Calu3 (cell line): ENCODE measurements at regions of chr10 and their contacts with region 1.

Region 1: GRCh38 chr10:13371897-13372470 is 23.9 kb upstream of the SEPHS1 start:
- DNase-seq: peak; percentile 76
- H3K4me3 Mint-ChIP-seq: no peak overlapping the region
- H3K27ac Mint-ChIP-seq: no peak overlapping the region
- H3K4me1 Mint-ChIP-seq: no peaks in the 10 kb centered on the region
- H3K27me3 Mint-ChIP-seq: peaks cover 17% of the 10 kb centered on the region
- CTCF ChIP-seq: peak; percentile 83

Region 2: GRCh38 chr10:13440185-13441061 is 68.4 kb after region 1 on chr10:
- CTCF ChIA-PET with region 1: interaction called, 36 read pairs
- intact Hi-C with region 1: loop called (anchors 1 kb)
- DNase-seq: peak; percentile 77
- H3K4me3 Mint-ChIP-seq: peak overlapping the region; percentile 68
- H3K27ac Mint-ChIP-seq: no peak overlapping the region
- H3K4me1 Mint-ChIP-seq: no peaks in the 10 kb centered on the region
- H3K27me3 Mint-ChIP-seq: peaks cover 40% of the 10 kb centered on the region
- CTCF ChIP-seq: peak; percentile 93

Region 3: GRCh38 chr10:13485623-13486022 is 113.6 kb after region 1 on chr10:
- CTCF ChIA-PET with region 1: no interaction called
- intact Hi-C with region 1: loop called (anchors 1 kb)
- DNase-seq: no peak
- H3K4me3 Mint-ChIP-seq: no peak overlapping the region
- H3K27ac Mint-ChIP-seq: no peak overlapping the region
- H3K4me1 Mint-ChIP-seq: no peaks in the 10 kb centered on the region
- H3K27me3 Mint-ChIP-seq: no peaks in the 10 kb centered on the region
- CTCF ChIP-seq: no peak

Region 4: GRCh38 chr10:13536674-13537366 is 164.8 kb after region 1 on chr10:
- CTCF ChIA-PET with region 1: interaction called, 21 read pairs
- intact Hi-C with region 1: loop called (anchors 1 kb)
- DNase-seq: peak; percentile 74
- H3K4me3 Mint-ChIP-seq: no peak overlapping the region
- H3K27ac Mint-ChIP-seq: no peak overlapping the region
- H3K4me1 Mint-ChIP-seq: no peaks in the 10 kb centered on the region
- H3K27me3 Mint-ChIP-seq: peaks cover 62% of the 10 kb centered on the region
- CTCF ChIP-seq: peak; percentile 66

Region 5: GRCh38 chr10:13586676-13587355 is 214.8 kb after region 1 on chr10 and contains the start of gene PRPF18:
- CTCF ChIA-PET with region 1: interaction called, 8 read pairs
- intact Hi-C with region 1: loop called (anchors 2 kb)
- DNase-seq: peak; percentile 95
- H3K4me3 Mint-ChIP-seq: peak within 1 kb of the TSS; percentile 97
- H3K27ac Mint-ChIP-seq: peak within 1 kb of the TSS; percentile 92
- H3K4me1 Mint-ChIP-seq: no peaks in the 10 kb centered on the region
- H3K27me3 Mint-ChIP-seq: peaks cover 8% of the 10 kb centered on the region
- CTCF ChIP-seq: peak; percentile 89
- total RNA-seq, gene PRPF18: 19.9 and 21.3 TPM in 2 replicates

Region 6: DNA sequence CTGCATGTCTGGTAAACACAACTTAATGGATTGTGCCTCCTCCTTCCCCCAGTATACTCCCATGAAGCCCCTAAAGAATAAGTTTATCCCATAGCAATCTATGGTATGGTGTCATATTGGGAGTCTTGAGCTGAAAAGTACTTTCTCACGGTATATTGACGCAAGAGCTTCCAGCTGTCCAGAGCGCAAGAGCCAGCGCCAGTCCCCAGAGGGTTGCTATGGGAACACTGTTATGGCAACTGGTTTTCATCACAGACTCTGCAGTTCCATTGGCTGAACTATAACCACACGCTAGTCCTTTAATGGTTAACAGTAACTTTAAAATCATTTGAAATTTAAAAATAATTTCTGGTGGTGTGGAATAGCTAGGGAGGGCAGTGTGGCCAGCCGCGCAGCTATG is 261.7 kb after region 1 on chr10:
- CTCF ChIA-PET with region 1: no interaction called
- intact Hi-C with region 1: no loop called
- DNase-seq: no peak
- H3K4me3 Mint-ChIP-seq: no peak overlapping the region
- H3K27ac Mint-ChIP-seq: no peak overlapping the region
- H3K4me1 Mint-ChIP-seq: peaks cover 5% of the 10 kb centered on the region
- H3K27me3 Mint-ChIP-seq: no peaks in the 10 kb centered on the region
- CTCF ChIP-seq: no peak

Region 7: DNA sequence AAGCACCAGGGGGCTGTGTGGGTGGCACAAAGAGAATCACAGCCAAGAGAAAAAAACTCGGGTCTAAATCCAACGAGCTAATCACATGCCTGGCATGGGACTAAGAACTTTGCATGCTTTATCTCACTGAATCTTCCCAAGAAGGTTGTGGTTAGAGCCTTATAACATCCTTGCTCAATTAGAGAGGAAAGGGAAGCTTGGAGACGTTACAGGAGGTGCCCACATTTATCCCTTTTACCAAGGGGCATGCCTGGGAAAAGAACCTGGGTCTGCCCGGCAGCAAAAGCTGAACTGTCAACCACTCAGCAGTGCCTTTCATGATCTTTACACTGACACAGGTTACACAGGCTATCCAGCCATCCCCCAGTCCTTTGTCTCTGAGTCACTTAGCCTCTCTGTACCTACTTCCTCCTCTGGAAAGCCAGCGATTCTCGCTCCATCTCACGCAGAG is 404.9 kb after region 1 on chr10:
- CTCF ChIA-PET with region 1: no interaction called
- intact Hi-C with region 1: loop called (anchors 10 kb)
- DNase-seq: no peak
- H3K4me3 Mint-ChIP-seq: no peak overlapping the region
- H3K27ac Mint-ChIP-seq: no peak overlapping the region
- H3K4me1 Mint-ChIP-seq: peaks cover 18% of the 10 kb centered on the region
- H3K27me3 Mint-ChIP-seq: no peaks in the 10 kb centered on the region
- CTCF ChIP-seq: no peak